ENCODE measurements at regions of chr19 and their contacts with region 1.

Region 1: DNA sequence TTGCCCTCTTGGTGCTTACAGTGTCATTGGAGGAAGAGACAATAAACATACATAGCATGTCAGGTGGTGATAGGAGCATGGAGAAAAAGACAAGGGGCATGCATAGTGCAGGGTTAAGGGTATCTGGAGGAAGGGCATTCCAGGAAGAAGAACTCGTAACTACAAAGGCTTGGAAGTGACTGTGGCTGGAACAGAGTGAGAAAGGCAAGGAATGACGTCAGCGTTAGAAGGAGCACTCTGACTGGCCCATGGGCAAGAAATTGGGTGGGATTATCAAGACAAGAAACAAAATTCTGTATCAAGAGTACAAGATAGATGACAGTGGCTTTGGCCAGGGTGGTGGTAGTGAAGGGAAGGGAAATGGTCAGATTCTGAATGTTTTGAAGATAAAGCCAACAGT is 11.2 kb downstream of the SMIM17 start:
- DNase-seq: no peak
- H3K4me3 ChIP-seq: no peak overlapping the region
- H3K27ac ChIP-seq: no peak overlapping the region
- H3K4me1 ChIP-seq: no peaks in the 10 kb centered on the region
- H3K27me3 ChIP-seq: no peaks in the 10 kb centered on the region
- CTCF ChIP-seq: no peak
- POLR2A ChIP-seq: no peak

Region 2: DNA sequence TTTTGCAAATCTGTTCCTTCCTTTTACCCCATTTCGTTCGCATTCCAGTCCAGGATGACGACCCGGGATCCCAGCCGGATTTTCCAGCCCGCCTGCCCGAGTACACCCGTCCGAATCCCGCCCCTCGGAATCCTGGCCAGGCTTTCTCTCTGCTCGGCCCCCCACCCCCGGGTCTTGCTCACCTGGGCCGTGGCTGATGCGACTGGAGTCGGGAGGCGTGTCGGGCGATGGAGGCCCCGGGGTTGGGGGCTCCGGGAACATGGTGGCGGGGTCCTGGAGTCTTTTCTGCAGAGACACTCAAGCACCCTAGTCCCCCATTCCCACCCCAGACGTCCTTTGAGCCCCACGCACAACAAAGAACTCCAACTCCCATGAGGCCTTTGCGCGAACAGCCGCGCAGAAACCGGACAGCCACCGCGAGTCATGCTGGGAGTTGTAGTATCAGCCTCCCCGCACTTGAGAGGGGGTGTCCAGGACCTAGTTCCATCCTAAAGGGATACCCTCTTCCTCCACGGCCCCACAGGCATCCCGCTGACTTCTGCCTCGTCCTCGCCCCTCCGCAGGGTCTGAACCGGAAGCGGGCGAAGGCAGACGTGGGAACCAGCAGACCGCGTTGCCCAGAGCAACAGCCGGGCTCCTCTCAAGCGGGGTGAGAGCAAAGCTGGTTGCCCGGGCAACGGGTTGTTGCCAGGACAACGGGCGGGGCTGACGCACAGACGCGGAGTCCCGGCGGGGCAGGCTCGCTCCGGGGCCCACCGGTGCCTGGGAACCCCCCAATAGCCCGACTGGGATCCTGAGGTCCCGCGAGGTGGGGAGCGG is 1475.2 kb before region 1 on chr19:
- intact Hi-C with region 1: loop called (anchors 10 kb)
- DNase-seq: no peak
- H3K4me3 ChIP-seq: peak overlapping the region in 2 of 3 donors; percentile 30 to 56
- H3K27ac ChIP-seq: no peak overlapping the region
- H3K4me1 ChIP-seq: peaks cover 0 to 4% of the 10 kb centered on the region in 2 donors
- H3K27me3 ChIP-seq: peaks cover 5 to 89% of the 10 kb centered on the region in 2 donors
- CTCF ChIP-seq: no peak
- POLR2A ChIP-seq: no peak